ENCODE measurements at regions of chr15 and their contacts with region 1.

Region 1: DNA sequence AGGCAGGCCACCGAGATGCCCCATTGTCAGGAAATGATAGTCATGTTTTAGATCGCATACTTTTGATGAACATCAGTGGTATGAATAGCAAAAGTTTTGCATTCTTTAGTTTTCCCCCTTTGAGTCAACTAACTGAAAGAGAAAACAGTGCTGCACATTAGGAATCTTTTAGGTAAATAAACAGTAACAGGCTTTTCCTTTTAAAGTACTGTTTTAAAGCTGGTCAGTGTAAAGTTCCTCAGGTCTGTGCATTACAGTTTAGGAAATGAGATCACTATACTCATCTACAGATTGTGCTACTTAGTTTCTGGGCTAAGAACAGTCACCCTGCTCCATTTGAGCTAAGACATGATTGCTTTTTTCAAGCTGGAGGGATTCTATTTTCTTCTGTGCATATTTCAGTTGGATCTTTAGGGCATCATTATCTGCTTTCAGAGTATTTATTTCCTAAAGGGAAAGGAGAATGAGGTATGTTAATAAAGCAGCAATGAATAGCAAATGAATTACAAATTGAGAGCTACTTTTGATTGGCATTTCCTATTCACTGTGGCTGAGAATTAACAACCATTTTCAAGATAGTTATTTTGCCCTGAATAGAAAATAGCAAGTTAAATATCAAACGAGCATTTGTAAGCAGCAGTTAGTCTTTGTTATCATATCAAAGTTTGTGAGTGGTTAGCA is 36.5 kb downstream of the FAM98B start:
- DNase-seq: no peak
- H3K4me3 Mint-ChIP-seq: no peak overlapping the region
- H3K27ac Mint-ChIP-seq: peak overlapping the region; percentile 30
- H3K4me1 Mint-ChIP-seq: peaks cover 46% of the 10 kb centered on the region
- H3K27me3 Mint-ChIP-seq: no peaks in the 10 kb centered on the region

Region 2: DNA sequence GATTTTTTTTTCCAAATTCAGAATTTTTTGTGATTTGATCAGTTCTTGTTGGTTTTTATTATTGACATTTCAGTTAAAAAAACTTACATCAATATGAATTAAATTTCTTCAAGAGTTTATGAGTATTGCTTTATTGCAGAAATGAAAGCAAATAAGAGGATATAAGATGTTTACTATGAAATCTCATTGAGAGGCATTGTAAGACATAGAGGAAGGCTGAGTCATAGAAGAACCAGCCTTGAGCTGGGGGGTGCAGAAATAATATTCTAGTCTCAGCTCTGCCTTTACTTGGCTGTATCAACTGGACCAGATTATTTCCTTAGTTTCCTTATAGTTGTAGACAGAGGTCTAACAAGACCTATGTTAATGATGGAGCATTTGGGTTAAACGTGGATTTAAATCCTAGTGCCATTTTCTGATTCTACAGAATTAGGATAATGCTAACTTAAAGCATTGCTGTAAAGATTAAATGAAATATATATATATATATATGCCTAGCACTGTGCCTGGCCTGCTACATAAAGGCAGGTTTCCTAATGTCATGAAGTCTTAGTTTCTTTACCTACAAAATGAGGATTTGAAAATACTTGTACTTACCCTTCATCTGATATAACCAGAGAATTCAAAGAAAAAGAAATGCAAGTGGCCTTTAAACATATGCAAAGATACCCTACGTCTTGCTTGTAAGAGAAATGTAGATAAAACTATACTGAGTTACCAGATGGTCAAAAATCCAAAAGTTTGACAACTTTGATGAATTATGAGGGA is 29.1 kb before region 1 on chr15:
- CTCF ChIA-PET with region 1: no interaction called
- intact Hi-C with region 1: no loop called
- DNase-seq: no peak
- H3K4me3 Mint-ChIP-seq: no peak overlapping the region
- H3K27ac Mint-ChIP-seq: no peak overlapping the region
- H3K4me1 Mint-ChIP-seq: peaks cover 41% of the 10 kb centered on the region
- H3K27me3 Mint-ChIP-seq: no peaks in the 10 kb centered on the region

Region 3: DNA sequence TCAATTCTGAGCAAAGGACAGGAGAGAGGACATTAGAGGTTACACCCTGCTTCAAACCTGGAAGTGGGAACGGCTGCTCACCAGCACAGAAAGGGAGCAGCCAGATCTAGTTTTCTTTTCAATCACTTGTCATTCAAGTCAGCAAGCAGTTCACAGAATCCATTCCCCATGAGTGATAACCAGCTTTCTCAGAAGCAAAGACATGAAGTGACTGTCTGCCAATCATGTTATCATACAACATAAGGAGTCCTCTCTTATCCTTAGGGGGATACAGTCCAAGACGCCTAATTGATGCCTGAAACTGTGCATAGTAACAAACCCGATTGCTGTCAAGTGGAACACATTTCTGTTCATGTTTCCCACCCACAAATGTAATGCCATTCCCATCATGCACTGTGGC is 18.3 kb after region 1 on chr15:
- CTCF ChIA-PET with region 1: interaction called, 3 read pairs
- intact Hi-C with region 1: loop called (anchors 1 kb)
- DNase-seq: peak; percentile 37
- H3K4me3 Mint-ChIP-seq: no peak overlapping the region
- H3K27ac Mint-ChIP-seq: peak overlapping the region; percentile 80
- H3K4me1 Mint-ChIP-seq: peaks cover 24% of the 10 kb centered on the region
- H3K27me3 Mint-ChIP-seq: no peaks in the 10 kb centered on the region

Region 4: DNA sequence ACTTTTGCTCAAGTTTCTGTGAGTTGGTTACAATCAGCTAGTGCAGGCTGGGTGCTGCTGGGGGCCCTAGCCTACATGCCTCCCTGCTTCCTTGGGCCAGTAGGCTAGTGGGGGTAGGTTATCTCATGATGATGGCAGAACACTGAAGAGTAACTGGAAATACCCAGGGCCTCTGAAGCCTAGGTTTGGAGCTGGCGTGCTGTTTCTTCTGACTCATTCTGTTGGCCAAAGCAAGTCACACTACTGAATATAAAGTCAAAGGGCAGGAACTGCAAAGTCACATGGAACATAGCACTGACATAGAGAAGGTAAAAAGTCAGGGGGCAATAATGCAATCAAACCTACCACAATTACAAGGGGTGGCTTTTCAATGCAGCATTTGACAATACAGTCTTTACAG is 39.7 kb after region 1 on chr15:
- CTCF ChIA-PET with region 1: no interaction called
- intact Hi-C with region 1: loop called (anchors 1 kb)
- DNase-seq: peak; percentile 75
- H3K4me3 Mint-ChIP-seq: no peak overlapping the region
- H3K27ac Mint-ChIP-seq: peak overlapping the region; percentile 80
- H3K4me1 Mint-ChIP-seq: peaks cover 86% of the 10 kb centered on the region
- H3K27me3 Mint-ChIP-seq: no peaks in the 10 kb centered on the region

Measured in activated naive CD4-positive, alpha-beta T cell treated with anti-CD3 and anti-CD28 coated beads for 36 hours (primary cell).